ENCODE measurements at regions of chr1 and their contacts with region 1.

Region 1: DNA sequence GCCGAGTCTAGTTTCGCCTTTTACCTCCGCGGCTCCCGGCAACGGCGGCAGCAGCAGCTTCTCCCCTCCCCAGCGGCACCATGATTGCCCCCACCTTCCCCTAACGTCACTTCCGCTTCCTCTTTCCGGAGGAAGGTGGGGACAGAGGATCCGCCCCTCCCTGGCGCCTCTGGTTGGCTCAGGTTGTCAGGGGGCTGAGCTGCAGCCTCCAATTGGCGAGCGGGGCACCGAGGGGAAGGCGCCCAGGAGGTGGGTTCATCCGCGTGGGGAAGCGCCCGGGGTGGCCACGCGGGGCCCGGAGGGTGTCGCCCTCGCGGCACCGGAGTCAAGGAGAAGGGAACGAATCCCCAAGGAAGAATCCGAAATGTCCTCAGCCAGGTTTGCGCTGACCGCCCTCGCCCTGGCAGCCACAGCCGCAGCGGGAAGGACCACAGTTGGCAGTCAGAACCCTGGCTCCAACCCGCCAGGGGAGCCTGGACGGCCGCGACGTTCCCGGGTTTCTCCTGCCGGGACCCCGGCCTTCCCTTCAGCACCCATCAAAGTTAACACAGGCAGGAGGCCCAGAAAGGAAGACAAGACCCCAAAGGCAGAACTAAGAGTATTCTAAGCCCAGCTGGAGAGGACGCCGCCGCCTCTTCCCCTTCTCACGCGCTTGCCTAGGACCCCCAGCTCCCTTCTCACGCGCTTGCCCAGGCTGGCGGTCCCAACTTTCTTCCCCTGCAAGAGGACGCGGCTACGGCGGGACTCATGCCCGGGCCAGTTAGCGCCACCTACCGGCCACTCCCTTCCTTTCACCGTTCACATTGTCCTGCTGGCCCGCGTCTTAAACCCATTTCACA is at the start of gene MTF1:
- DNase-seq: peak; percentile 90 to 99 (median 97)
- ATAC-seq: peak; percentile 98
- H3K4me3 Mint-ChIP-seq: peak within 1 kb of the TSS; percentile 90 to 99 (median 97)
- H3K27ac Mint-ChIP-seq: peak within 1 kb of the TSS; percentile 68 to 97 (median 96)
- H3K4me1 Mint-ChIP-seq: peaks cover 14 to 37% (median 35%) of the 10 kb centered on the region in 4 donors
- H3K27me3 Mint-ChIP-seq: no peaks in the 10 kb centered on the region
- polyA plus RNA-seq, gene MTF1: 10.3 to 23.1 (median 14.5) TPM

Region 2: GRCh38 chr1:37807555-37808368 is 52.0 kb before region 1 on chr1 and contains the starts of genes C1orf122 and YRDC:
- POLR2A ChIA-PET with region 1: interaction called, 21 read pairs
- DNase-seq: peak; percentile 82 to 94 (median 88)
- ATAC-seq: peak; percentile 91 to 96
- H3K4me3 Mint-ChIP-seq: peak within 1 kb of the TSS; percentile 92 to 99 (median 96)
- H3K27ac Mint-ChIP-seq: peak within 1 kb of the TSS; percentile 90 to 99 (median 98)
- H3K4me1 Mint-ChIP-seq: peaks cover 10 to 50% (median 43%) of the 10 kb centered on the region in 4 donors
- H3K27me3 Mint-ChIP-seq: no peaks in the 10 kb centered on the region
- polyA plus RNA-seq, gene C1orf122: 28.5 to 30.5 (median 29.2) TPM
- polyA plus RNA-seq, gene YRDC: 14.8 to 34.3 (median 23.0) TPM

Measured in naive thymus-derived CD8-positive, alpha-beta T cell (primary cell).